Endothelial cell of umbilical vein (primary cell): ENCODE measurements at regions of chr3 and their contacts with region 1.

Region 1: GRCh38 chr3:167437428-167438139 is 36.3 kb downstream of the SERPINI2 start:
- DNase-seq: no peak
- H3K4me3 ChIP-seq: no peak overlapping the region
- H3K27ac ChIP-seq: no peak overlapping the region
- H3K4me1 ChIP-seq: no peaks in the 10 kb centered on the region
- H3K27me3 ChIP-seq: no peaks in the 10 kb centered on the region
- CTCF ChIP-seq: no peak
- POLR2A ChIP-seq: no peak

Region 2: DNA sequence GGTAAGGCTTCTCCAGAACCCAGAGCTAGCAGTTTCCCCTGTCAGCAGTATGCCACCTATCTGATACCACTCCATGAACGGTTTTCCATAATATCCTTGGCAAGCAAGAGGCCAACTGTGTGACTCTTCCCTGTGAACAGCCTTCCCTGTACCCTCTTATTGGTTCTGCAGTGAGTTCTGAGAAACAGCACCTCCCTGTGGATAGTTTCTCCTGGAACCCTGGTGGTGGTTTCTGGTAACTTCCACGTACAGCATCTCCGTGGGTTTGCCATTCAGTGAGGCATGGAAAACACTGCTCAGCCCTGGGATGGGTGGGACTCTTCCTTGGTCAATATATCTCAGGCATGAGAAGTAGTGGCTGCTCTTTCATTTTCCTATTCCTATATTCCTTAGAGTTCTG is 55.7 kb after region 1 on chr3:
- CTCF ChIA-PET with region 1: no interaction called
- POLR2A ChIA-PET with region 1: interaction called, 10 read pairs
- dilution Hi-C with region 1: no loop called
- intact Hi-C with region 1: no loop called
- DNase-seq: no peak
- H3K4me3 ChIP-seq: no peak overlapping the region
- H3K27ac ChIP-seq: no peak overlapping the region
- H3K4me1 ChIP-seq: no peaks in the 10 kb centered on the region
- H3K27me3 ChIP-seq: no peaks in the 10 kb centered on the region
- CTCF ChIP-seq: no peak
- POLR2A ChIP-seq: no peak